ENCODE measurements at regions of chr3 and their contacts with region 1.

Region 1: DNA sequence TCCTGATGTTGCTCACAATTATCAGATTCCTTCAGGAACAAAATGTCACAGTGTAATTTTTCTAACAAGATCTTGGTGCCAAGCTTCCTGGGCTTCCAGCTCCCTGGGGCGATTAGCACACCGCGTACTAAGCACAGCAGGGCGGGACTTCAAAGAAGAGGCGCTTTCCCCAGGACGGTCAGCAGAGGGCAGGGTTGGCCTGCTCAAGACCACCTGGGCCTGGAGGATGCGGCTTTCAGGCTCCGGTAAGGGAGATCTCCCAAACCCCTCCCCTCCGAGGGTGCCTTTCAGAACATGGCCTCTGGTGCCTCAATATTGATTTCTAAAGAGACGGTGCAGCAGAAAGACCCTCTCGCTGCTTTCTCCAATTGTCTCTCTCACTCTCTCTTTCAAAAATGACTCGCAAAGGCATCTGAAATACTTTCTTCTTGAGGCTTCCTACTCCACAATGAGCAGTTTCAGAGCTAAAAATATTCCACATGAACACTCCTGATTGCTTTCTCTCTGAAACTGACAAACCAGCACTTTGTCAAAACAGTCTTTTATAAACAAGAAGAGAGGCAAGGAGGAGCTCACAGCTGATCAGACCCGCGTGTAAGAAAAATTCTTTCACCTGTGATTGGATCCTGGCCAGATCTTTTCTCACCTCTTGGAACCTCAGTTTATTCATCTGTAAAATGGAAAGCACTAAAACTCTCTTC is 154.0 kb downstream of the ADAMTS9 start:
- DNase-seq: peak; percentile 82
- ATAC-seq: peak; percentile 96 to 98
- H3K4me3 ChIP-seq: peak overlapping the region in 2 of 4 donors; percentile 20 to 44
- H3K27ac ChIP-seq: peak overlapping the region in 3 of 4 donors; percentile 50 to 65 (median 60)
- H3K4me1 ChIP-seq: peaks cover 6% of the 10 kb centered on the region in 2 donors
- H3K27me3 ChIP-seq: no peaks in the 10 kb centered on the region
- CTCF ChIP-seq: peak; percentile 76 to 92 (median 86)
- POLR2A ChIP-seq: no peak

Region 2: GRCh38 chr3:63886858-63887257 is 646.9 kb before region 1 on chr3:
- in situ Hi-C with region 1: no loop called
- intact Hi-C with region 1: no loop called
- DNase-seq: no peak
- ATAC-seq: peak; percentile 95 to 97
- H3K4me3 ChIP-seq: peak overlapping the region in 1 of 4 donors; percentile 18
- H3K27ac ChIP-seq: peak overlapping the region in 3 of 4 donors; percentile 42 to 65 (median 60)
- H3K4me1 ChIP-seq: peaks cover 45 to 48% of the 10 kb centered on the region in 2 donors
- H3K27me3 ChIP-seq: no peaks in the 10 kb centered on the region
- CTCF ChIP-seq: no peak
- POLR2A ChIP-seq: no peak

Region 3: DNA sequence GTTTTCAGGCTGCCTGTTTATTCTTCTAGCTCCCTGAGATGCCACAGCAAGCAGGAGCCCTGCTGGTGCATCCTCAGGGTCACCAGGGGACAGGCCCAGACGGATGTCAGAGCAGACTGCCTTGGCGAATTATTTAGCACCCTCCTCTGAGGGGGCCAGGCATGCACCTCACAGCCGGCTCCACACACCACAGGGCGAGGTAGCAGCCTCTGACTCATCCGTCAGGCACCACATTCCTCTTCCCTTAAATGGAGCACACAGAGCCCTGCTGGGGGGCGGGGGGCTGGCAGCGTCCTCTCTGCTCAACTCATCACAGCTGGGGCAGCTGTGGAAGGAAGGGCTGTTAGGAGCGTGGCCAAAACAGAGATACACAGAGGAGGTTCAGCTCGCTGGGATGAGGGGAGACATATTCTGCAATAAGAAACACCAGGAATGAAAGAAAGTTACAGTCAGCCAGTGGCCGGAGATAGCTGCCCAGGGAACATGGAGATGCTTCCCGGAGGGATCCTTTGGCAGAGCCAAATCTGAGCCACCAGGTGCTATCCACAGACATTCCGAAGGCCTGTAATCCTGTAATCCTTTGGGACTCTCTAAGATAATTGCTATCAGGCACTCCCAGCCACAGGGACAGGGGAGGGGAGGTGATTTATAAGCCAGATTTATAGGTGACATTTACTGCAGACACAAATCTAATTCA is 294.6 kb before region 1 on chr3:
- in situ Hi-C with region 1: no loop called
- intact Hi-C with region 1: no loop called
- DNase-seq: peak in 1 of 2 donors; percentile 61
- ATAC-seq: peak; percentile 47 to 56
- H3K4me3 ChIP-seq: no peak overlapping the region
- H3K27ac ChIP-seq: peak overlapping the region in 1 of 4 donors; percentile 16
- H3K4me1 ChIP-seq: no peaks in the 10 kb centered on the region
- H3K27me3 ChIP-seq: no peaks in the 10 kb centered on the region
- CTCF ChIP-seq: no peak
- POLR2A ChIP-seq: no peak

Region 4: DNA sequence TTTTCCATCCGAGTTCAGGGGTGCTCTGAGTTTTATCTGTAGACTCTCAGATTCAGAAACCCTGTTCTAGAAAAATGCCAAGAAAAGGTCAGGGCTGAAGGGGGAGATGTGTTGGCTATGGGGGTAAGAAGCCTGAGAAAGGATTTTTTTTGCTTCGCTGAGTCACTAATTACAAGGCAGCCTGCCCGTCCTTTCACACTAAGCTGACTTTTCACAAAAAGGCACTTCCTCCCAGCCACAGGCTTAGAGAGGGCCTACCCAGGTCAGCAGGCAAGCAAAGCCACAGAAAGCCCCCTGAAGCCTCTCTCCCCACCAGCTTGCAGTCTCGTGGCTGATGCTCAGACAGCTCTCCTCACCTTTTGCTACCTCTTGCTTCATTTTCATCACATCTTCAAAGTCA is 116.0 kb before region 1 on chr3:
- in situ Hi-C with region 1: no loop called
- intact Hi-C with region 1: no loop called
- DNase-seq: no peak
- ATAC-seq: no peak
- H3K4me3 ChIP-seq: no peak overlapping the region
- H3K27ac ChIP-seq: no peak overlapping the region
- H3K4me1 ChIP-seq: no peaks in the 10 kb centered on the region
- H3K27me3 ChIP-seq: no peaks in the 10 kb centered on the region
- CTCF ChIP-seq: no peak
- POLR2A ChIP-seq: no peak

Region 5: GRCh38 chr3:64445321-64446300 is 88.2 kb before region 1 on chr3:
- in situ Hi-C with region 1: no loop called
- intact Hi-C with region 1: no loop called
- DNase-seq: no peak
- ATAC-seq: no peak
- H3K4me3 ChIP-seq: peak overlapping the region; percentile 22 to 35 (median 27)
- H3K27ac ChIP-seq: no peak overlapping the region
- H3K4me1 ChIP-seq: peaks cover 0 to 5% of the 10 kb centered on the region in 2 donors
- H3K27me3 ChIP-seq: peaks cover 19 to 47% (median 27%) of the 10 kb centered on the region in 3 donors
- CTCF ChIP-seq: no peak
- POLR2A ChIP-seq: no peak

Region 6: GRCh38 chr3:64666171-64666588 is 132.4 kb after region 1 on chr3:
- in situ Hi-C with region 1: loop called in 1 of 4 experiments (anchors 10 kb)
- intact Hi-C with region 1: no loop called
- DNase-seq: no peak
- ATAC-seq: no peak
- H3K4me3 ChIP-seq: no peak overlapping the region
- H3K27ac ChIP-seq: peak overlapping the region in 1 of 4 donors; percentile 8
- H3K4me1 ChIP-seq: peaks cover 48 to 54% of the 10 kb centered on the region in 2 donors
- H3K27me3 ChIP-seq: no peaks in the 10 kb centered on the region
- CTCF ChIP-seq: no peak
- POLR2A ChIP-seq: no peak

Region 7: DNA sequence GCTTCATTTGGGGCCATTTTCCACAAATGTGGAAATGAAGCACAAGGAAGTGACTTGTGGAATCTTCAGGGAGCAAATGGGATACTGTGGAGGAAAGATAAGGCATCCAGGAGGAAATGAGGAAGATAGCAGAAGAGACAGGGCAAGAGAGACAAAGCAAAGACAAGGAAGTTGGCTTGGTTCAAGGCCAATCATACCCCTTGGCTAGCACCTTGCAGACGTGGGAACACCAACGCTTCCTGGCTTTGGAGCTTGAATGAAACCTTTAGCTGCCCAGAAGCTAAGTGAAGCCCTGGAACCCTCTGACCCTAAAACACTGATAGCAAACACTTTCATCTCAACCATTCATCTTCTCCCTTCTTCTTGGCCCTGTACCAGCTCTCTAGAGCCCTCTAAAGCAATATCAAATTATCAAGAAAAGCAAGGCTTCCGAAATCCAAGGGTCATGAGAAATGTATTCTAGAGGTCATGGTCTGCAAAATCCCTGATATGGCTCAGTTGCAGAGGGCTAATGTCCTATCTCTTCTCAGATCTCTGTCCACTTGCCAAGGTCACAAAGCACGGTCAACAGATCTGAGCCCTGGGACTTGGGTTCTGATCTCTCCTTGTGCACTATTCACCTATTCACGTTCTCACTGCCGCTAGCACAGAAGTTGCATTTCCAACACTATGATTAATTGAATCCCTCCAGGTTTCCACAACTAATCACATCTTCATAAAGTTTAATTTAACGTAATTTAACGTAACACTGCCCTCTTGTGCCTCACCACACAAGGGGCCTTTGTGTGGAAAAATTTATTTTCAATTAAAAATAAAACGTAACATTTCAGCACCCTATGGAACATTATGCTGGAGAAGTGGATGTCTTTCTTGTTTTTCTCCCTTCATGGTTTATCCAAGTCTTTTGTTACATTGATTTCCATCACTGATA is 711.6 kb after region 1 on chr3:
- in situ Hi-C with region 1: loop called in 3 of 4 experiments (anchors 10 to 25 kb)
- intact Hi-C with region 1: loop called (anchors 5 kb)
- DNase-seq: no peak
- ATAC-seq: peak in 1 of 2 donors; percentile 27
- H3K4me3 ChIP-seq: no peak overlapping the region
- H3K27ac ChIP-seq: no peak overlapping the region
- H3K4me1 ChIP-seq: no peaks in the 10 kb centered on the region
- H3K27me3 ChIP-seq: no peaks in the 10 kb centered on the region
- CTCF ChIP-seq: peak in 3 of 5 experiments; percentile 28 to 44 (median 29)
- POLR2A ChIP-seq: no peak

Region 8: DNA sequence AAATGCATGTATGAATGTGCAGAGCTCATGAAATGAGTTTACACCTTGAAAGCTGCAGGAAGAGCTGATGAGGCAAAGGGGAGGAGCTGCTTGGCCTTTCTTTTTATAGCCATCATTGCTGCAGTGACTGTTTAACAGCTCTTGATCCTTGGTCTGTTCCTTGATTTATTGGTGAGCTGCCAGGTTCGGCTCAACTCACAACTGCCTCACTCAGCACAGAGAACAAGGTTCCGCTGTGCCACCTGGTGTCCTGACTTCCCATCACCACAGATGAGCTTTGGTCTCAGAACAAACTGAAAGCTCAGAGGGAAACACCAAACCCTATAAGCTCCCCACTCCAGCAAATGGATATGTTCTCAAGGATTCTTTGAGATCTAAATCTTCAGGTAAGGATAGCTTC is 878.8 kb after region 1 on chr3:
- in situ Hi-C with region 1: loop called (anchors 5 to 25 kb)
- intact Hi-C with region 1: loop called (anchors 1 kb)
- DNase-seq: peak; percentile 59 to 68
- ATAC-seq: peak; percentile 91 to 98
- H3K4me3 ChIP-seq: no peak overlapping the region
- H3K27ac ChIP-seq: peak overlapping the region in 2 of 4 donors; percentile 14 to 56
- H3K4me1 ChIP-seq: peaks cover 18 to 47% of the 10 kb centered on the region in 2 donors
- H3K27me3 ChIP-seq: no peaks in the 10 kb centered on the region
- CTCF ChIP-seq: peak in 4 of 5 experiments; percentile 25 to 48 (median 40)
- POLR2A ChIP-seq: no peak

Region 9: GRCh38 chr3:65732051-65732935 is 1198.5 kb after region 1 on chr3:
- in situ Hi-C with region 1: loop called in 3 of 4 experiments (anchors 25 kb)
- intact Hi-C with region 1: loop called (anchors 5 kb)
- DNase-seq: no peak
- ATAC-seq: peak; percentile 79 to 87
- H3K4me3 ChIP-seq: no peak overlapping the region
- H3K27ac ChIP-seq: no peak overlapping the region
- H3K4me1 ChIP-seq: peaks cover 11 to 14% of the 10 kb centered on the region in 2 donors
- H3K27me3 ChIP-seq: no peaks in the 10 kb centered on the region
- CTCF ChIP-seq: peak in 4 of 5 experiments; percentile 43 to 78 (median 65)
- POLR2A ChIP-seq: no peak

Measured in gastrocnemius medialis (tissue), 4 donors.